Caco-2 (cell line): ENCODE measurements at regions of chr5 and their contacts with region 1.

Region 1: GRCh38 chr5:175282611-175283235 is 161.3 kb downstream of the DRD1 start:
- DNase-seq: peak; percentile 67 to 77
- H3K4me3 ChIP-seq: no peak overlapping the region
- H3K4me3 Mint-ChIP-seq: no peak overlapping the region
- H3K27ac Mint-ChIP-seq: peak overlapping the region; percentile 93
- H3K4me1 ChIP-seq: peaks cover 48% of the 10 kb centered on the region
- H3K4me1 Mint-ChIP-seq: peaks cover 42% of the 10 kb centered on the region
- H3K27me3 ChIP-seq: no peaks in the 10 kb centered on the region
- H3K27me3 Mint-ChIP-seq: no peaks in the 10 kb centered on the region
- CTCF ChIP-seq: no peak

Region 2: GRCh38 chr5:175344331-175345195 is 61.8 kb after region 1 on chr5:
- CTCF ChIA-PET with region 1: no interaction called
- POLR2A ChIA-PET with region 1: no interaction called
- intact Hi-C with region 1: loop called (anchors 1 kb)
- DNase-seq: peak; percentile 68 to 75
- H3K4me3 ChIP-seq: no peak overlapping the region
- H3K4me3 Mint-ChIP-seq: no peak overlapping the region
- H3K27ac Mint-ChIP-seq: peak overlapping the region; percentile 71
- H3K4me1 ChIP-seq: peaks cover 26% of the 10 kb centered on the region
- H3K4me1 Mint-ChIP-seq: peaks cover 40% of the 10 kb centered on the region
- H3K27me3 ChIP-seq: no peaks in the 10 kb centered on the region
- H3K27me3 Mint-ChIP-seq: no peaks in the 10 kb centered on the region
- CTCF ChIP-seq: no peak

Region 3: GRCh38 chr5:175418285-175418684 is 135.6 kb after region 1 on chr5:
- CTCF ChIA-PET with region 1: no interaction called
- POLR2A ChIA-PET with region 1: no interaction called
- intact Hi-C with region 1: loop called (anchors 5 kb)
- DNase-seq: no peak
- H3K4me3 ChIP-seq: no peak overlapping the region
- H3K4me3 Mint-ChIP-seq: no peak overlapping the region
- H3K27ac Mint-ChIP-seq: no peak overlapping the region
- H3K4me1 ChIP-seq: peaks cover 22% of the 10 kb centered on the region
- H3K4me1 Mint-ChIP-seq: peaks cover 16% of the 10 kb centered on the region
- H3K27me3 ChIP-seq: no peaks in the 10 kb centered on the region
- H3K27me3 Mint-ChIP-seq: no peaks in the 10 kb centered on the region
- CTCF ChIP-seq: no peak